Psoas muscle (tissue), 8 donors: ENCODE measurements at regions of chr20 and their contacts with region 1.

Region 1: DNA sequence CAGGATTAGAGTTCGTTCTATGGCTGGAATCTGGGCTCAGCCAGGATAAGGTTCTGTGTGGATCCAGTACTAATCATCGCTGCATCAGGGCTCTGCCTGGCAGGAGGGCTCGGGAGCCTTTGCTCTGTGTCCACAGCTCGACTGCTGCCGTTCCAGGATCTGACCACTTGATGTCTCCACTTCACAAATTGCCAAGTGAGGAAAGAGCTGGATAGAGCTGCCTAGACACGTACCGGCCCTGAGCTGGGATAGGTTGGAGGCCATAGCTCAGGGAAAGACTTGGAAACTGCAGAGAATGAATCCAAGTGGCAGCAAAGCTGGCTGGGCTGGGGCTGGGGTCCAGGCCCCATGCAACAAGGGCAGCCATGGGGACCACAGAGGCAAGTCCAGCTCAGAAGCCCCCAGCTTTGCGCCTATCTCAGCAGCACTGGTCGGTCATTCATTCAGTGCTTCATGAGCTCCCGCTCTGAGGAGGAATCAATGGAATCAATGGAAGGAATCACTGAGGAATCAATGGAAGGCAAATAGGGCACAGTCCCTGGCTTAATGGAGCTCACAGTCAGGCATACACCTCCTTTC is 38.0 kb upstream of the TOP1 start:
- DNase-seq: peak; percentile 74 to 83
- ATAC-seq: peak; percentile 97 to 99 (median 98)
- H3K4me3 ChIP-seq: no peak overlapping the region
- H3K27ac ChIP-seq: no peak overlapping the region
- H3K4me1 ChIP-seq: no peaks in the 10 kb centered on the region
- H3K27me3 ChIP-seq: no peaks in the 10 kb centered on the region
- CTCF ChIP-seq: peak; percentile 83

Region 2: GRCh38 chr20:41078329-41078728 is 87.7 kb after region 1 on chr20:
- intact Hi-C with region 1: loop called in 1 of 2 experiments (anchors 5 kb)
- DNase-seq: no peak
- ATAC-seq: peak in 2 of 4 donors; percentile 52 to 78
- H3K4me3 ChIP-seq: no peak overlapping the region
- H3K27ac ChIP-seq: no peak overlapping the region
- H3K4me1 ChIP-seq: peaks cover 9% of the 10 kb centered on the region
- H3K27me3 ChIP-seq: no peaks in the 10 kb centered on the region
- CTCF ChIP-seq: peak; percentile 50

Region 3: GRCh38 chr20:41095110-41095969 is 104.7 kb after region 1 on chr20:
- intact Hi-C with region 1: loop called (anchors 2 kb)
- DNase-seq: peak; percentile 52 to 63
- ATAC-seq: peak; percentile 54 to 87 (median 68)
- H3K4me3 ChIP-seq: no peak overlapping the region
- H3K27ac ChIP-seq: no peak overlapping the region
- H3K4me1 ChIP-seq: no peaks in the 10 kb centered on the region
- H3K27me3 ChIP-seq: no peaks in the 10 kb centered on the region
- CTCF ChIP-seq: peak; percentile 86